PC-9 (cell line): ENCODE measurements at regions of chr12 and their contacts with region 1.

Region 1: DNA sequence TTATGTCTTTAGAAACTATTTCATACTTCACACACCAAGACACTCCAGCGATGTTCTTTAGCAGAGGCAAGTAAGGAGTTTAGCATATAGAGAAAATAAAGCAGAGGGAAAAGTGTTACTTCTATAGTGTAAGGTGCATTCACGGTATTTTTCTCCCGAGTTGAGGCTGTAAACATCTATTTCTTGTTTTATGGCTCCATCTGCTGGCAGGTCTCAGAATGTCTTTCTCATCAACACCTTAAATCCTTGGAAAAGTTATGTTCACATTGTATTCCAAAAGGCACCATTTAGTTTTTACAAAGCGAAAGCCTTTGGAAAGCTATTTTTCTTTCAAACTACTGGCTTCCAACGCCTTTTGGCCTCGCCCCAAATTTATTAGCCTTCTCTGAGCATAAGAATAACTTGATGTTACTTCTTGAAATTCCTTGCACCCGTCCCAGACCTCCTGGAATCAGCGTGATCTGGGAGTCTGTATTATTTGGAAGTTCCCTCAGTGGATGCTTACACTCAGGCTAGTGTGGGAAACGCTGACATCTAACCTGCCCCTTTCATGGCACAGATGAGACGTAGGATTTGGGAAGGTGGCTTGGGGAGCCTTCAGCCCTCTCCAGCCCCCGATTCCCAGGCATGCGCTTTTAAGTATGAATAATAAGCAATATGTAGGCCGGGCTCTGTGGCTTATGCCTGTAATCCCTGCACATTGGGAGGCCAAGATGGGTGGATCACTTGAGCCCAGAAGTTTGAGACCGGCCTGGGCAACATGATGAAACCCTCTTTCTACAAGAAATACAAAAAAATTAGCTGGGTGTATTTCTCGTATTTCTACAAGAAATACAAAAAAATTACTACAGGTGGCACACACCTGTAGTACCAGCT is 1.9 kb upstream of the PIWIL1 start:
- DNase-seq: peak in 1 of 2 experiments; percentile 12
- H3K4me3 ChIP-seq: no peak overlapping the region
- H3K27ac ChIP-seq: no peak overlapping the region
- H3K4me1 ChIP-seq: no peaks in the 10 kb centered on the region
- H3K27me3 ChIP-seq: peaks cover 20% of the 10 kb centered on the region
- CTCF ChIP-seq: peak; percentile 75

Region 2: GRCh38 chr12:130026608-130027176 is 309.1 kb before region 1 on chr12:
- CTCF ChIA-PET with region 1: no interaction called
- POLR2A ChIA-PET with region 1: no interaction called
- intact Hi-C with region 1: loop called (anchors 5 kb)
- DNase-seq: peak in 1 of 2 experiments; percentile 28
- H3K4me3 ChIP-seq: no peak overlapping the region
- H3K27ac ChIP-seq: no peak overlapping the region
- H3K4me1 ChIP-seq: no peaks in the 10 kb centered on the region
- H3K27me3 ChIP-seq: peaks cover 26% of the 10 kb centered on the region
- CTCF ChIP-seq: peak; percentile 70

Region 3: DNA sequence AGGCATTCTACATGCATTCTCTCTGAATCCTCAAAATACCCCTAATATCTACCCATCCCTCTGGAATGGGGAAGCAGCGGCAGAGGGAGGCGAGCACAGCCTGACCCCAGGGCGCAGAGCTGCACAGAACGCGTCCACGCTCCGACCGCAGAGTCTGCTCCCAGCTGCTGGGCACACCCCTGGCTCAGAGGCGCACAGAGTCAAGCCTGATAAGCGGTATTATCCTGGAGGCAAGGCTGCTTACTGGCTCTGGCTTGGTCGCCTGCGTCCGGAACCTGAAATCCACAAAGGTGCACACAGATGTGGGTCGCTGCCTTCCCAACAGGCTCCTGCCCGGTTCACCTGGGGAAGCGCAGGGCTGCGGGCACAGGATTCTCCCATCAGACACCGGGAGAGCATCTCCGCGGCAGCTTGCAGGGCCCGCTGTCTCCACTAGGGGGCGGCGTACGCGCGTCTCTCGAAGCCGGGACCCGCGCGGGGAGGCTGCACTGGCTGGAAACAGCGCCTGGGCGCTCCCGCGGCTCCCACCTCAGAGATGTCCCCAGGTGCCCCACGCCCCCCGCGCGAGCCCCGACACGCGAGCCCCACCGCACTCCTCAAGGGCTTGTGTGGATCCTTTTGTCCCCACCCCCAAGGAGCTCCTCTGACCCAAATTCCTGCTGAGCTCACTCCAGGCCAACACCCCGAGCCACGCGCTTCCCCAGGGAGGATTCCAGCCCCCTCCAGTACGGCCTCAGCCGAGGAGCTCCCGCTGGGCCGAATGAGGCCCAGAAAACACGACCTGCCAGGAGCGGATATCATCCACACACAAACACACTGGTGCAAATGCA is 293.6 kb before region 1 on chr12:
- CTCF ChIA-PET with region 1: no interaction called
- POLR2A ChIA-PET with region 1: no interaction called
- intact Hi-C with region 1: loop called (anchors 1 kb)
- DNase-seq: no peak
- H3K4me3 ChIP-seq: no peak overlapping the region
- H3K27ac ChIP-seq: no peak overlapping the region
- H3K4me1 ChIP-seq: no peaks in the 10 kb centered on the region
- H3K27me3 ChIP-seq: peaks cover 29% of the 10 kb centered on the region
- CTCF ChIP-seq: no peak